Caco-2 (cell line): ENCODE measurements at regions of chr13 and their contacts with region 1.

Region 1: DNA sequence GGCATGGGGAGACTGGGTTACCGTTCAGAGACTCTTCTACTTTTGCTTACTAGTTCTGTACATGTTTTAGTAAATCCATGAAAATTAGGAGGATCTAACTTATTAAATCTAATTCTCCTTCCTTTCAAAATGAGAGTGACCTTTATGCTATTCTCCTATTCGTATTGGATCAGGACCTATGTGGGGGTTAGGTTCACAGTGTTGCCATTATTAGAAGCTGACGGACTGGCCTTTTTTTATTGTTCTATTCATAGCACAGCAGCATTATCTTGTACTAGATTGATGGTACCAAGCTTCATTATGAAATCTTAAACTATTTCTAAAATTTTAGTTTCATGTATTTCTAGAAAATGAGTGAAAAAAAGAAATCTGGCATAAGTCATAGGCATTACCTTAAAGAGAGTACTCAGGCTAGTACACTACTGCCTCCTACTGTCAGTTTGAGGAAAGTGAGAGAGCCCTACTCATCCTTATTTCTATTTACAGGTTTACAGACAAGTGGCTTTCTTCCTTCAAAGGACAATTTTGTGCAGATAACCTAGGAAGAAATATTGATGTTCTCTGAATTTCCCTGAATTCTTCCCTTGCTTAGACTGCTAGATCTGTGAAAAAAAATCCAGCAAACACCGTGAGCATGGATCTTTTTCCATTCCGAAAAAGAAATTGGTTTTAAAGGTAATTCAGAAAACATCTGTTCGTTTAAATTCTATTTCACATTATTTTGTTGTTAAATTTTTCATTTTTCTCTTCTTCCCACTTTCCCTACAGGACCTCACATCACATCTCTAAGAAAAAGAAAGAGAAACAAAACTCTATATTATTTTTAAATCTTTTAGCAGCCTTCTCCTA is 485.5 kb downstream of the DIAPH3 start:
- DNase-seq: peak in 1 of 2 experiments; percentile 51
- H3K4me3 ChIP-seq: no peak overlapping the region
- H3K4me3 Mint-ChIP-seq: no peak overlapping the region
- H3K27ac Mint-ChIP-seq: no peak overlapping the region
- H3K4me1 ChIP-seq: peaks cover 42% of the 10 kb centered on the region
- H3K4me1 Mint-ChIP-seq: peaks cover 6% of the 10 kb centered on the region
- H3K27me3 ChIP-seq: no peaks in the 10 kb centered on the region
- H3K27me3 Mint-ChIP-seq: no peaks in the 10 kb centered on the region
- CTCF ChIP-seq: peak; percentile 79 to 85

Region 2: GRCh38 chr13:59176775-59177174 is 501.4 kb before region 1 on chr13:
- CTCF ChIA-PET with region 1: no interaction called
- POLR2A ChIA-PET with region 1: no interaction called
- intact Hi-C with region 1: loop called (anchors 2 kb)
- DNase-seq: peak in 1 of 2 experiments; percentile 12
- H3K4me3 ChIP-seq: no peak overlapping the region
- H3K4me3 Mint-ChIP-seq: no peak overlapping the region
- H3K27ac Mint-ChIP-seq: no peak overlapping the region
- H3K4me1 ChIP-seq: no peaks in the 10 kb centered on the region
- H3K4me1 Mint-ChIP-seq: no peaks in the 10 kb centered on the region
- H3K27me3 ChIP-seq: no peaks in the 10 kb centered on the region
- H3K27me3 Mint-ChIP-seq: no peaks in the 10 kb centered on the region
- CTCF ChIP-seq: peak; percentile 42 to 54

Region 3: DNA sequence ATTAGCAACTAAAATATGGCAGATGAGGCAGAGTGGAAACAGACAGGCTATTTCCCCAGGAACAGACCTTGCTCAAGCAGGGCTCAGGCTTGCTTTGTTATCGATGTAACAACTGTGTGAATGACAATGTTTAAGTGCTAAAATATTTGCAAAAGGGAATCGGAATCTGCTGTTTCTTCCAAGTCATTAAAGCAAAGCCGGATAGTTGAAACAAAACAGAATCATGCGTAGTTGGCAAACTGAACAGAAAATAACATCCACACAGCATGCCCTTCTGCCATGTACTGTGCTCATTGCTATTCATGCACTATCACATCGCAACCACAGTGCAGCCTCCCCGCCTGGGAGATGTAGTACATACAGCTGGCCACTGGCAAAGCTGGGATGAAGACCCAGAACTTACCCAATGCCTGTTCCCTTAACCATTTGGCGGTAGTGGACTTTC is 313.5 kb before region 1 on chr13:
- CTCF ChIA-PET with region 1: no interaction called
- POLR2A ChIA-PET with region 1: no interaction called
- intact Hi-C with region 1: no loop called
- DNase-seq: peak in 1 of 2 experiments; percentile 13
- H3K4me3 ChIP-seq: no peak overlapping the region
- H3K4me3 Mint-ChIP-seq: no peak overlapping the region
- H3K27ac Mint-ChIP-seq: no peak overlapping the region
- H3K4me1 ChIP-seq: peaks cover 10% of the 10 kb centered on the region
- H3K4me1 Mint-ChIP-seq: peaks cover 8% of the 10 kb centered on the region
- H3K27me3 ChIP-seq: no peaks in the 10 kb centered on the region
- H3K27me3 Mint-ChIP-seq: no peaks in the 10 kb centered on the region
- CTCF ChIP-seq: no peak

Region 4: DNA sequence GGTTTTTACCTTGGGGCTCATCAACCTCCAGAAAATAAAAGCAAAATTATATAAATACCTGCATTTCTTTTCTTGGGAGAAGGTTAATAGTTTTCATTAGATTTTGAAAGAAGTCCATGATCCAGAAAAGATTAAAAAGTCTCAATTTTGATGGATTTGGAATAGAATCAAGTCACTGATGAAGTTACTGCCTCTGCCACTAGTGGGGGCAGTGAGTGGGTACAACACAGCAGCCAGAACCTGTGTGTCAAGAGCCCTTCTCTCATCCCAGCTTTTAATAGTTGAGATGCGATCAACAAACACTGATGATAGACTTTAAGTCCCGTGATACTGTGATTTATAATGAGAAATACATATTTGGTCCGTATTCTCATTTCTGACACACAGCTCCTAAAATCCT is 201.2 kb before region 1 on chr13:
- CTCF ChIA-PET with region 1: no interaction called
- POLR2A ChIA-PET with region 1: no interaction called
- intact Hi-C with region 1: loop called (anchors 1 kb)
- DNase-seq: peak in 1 of 2 experiments; percentile 11
- H3K4me3 ChIP-seq: no peak overlapping the region
- H3K4me3 Mint-ChIP-seq: no peak overlapping the region
- H3K27ac Mint-ChIP-seq: no peak overlapping the region
- H3K4me1 ChIP-seq: no peaks in the 10 kb centered on the region
- H3K4me1 Mint-ChIP-seq: peaks cover 6% of the 10 kb centered on the region
- H3K27me3 ChIP-seq: no peaks in the 10 kb centered on the region
- H3K27me3 Mint-ChIP-seq: no peaks in the 10 kb centered on the region
- CTCF ChIP-seq: peak; percentile 23 to 54

Region 5: GRCh38 chr13:59531571-59532091 is 146.6 kb before region 1 on chr13:
- CTCF ChIA-PET with region 1: no interaction called
- POLR2A ChIA-PET with region 1: no interaction called
- intact Hi-C with region 1: no loop called
- DNase-seq: no peak
- H3K4me3 ChIP-seq: no peak overlapping the region
- H3K4me3 Mint-ChIP-seq: no peak overlapping the region
- H3K27ac Mint-ChIP-seq: no peak overlapping the region
- H3K4me1 ChIP-seq: no peaks in the 10 kb centered on the region
- H3K4me1 Mint-ChIP-seq: peaks cover 12% of the 10 kb centered on the region
- H3K27me3 ChIP-seq: no peaks in the 10 kb centered on the region; the same call in 1 of the 2 replicates
- H3K27me3 Mint-ChIP-seq: no peaks in the 10 kb centered on the region
- CTCF ChIP-seq: no peak

Region 6: DNA sequence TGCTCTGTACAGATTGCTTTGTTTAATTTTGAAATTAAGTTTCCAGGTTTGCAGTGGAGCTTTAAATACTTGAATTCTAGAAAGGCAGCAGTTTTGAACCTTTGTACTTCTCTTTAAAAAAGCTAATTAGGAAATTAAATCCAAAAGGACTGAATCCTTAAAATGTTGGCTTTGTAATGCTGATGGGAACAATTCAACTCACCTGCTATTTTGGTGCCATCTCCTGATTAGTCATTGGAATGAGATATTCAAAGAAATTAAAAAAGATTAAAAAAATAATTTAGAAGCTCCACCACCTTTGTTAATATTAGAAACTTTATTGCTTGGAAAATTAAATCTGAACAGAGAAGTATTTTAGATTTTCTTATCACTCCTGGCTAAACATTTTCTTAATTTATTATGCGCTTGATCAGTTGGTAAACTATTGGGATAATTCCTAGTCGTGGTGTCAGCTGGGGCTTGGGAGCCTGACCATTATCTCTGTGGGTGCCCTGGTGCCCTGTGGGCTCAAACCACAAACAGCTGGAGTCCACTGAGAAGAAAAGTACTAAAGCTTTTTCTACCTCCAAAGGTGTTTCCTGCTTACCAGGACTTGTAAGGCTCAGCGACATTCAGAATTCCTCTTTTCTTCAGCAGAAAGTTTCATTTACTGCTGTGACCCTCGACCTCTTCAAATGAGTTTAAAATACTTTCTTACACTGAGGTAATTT is 54.8 kb before region 1 on chr13:
- CTCF ChIA-PET with region 1: no interaction called
- POLR2A ChIA-PET with region 1: no interaction called
- intact Hi-C with region 1: no loop called
- DNase-seq: no peak
- H3K4me3 ChIP-seq: no peak overlapping the region
- H3K4me3 Mint-ChIP-seq: no peak overlapping the region
- H3K27ac Mint-ChIP-seq: no peak overlapping the region
- H3K4me1 ChIP-seq: no peaks in the 10 kb centered on the region
- H3K4me1 Mint-ChIP-seq: no peaks in the 10 kb centered on the region
- H3K27me3 ChIP-seq: no peaks in the 10 kb centered on the region
- H3K27me3 Mint-ChIP-seq: no peaks in the 10 kb centered on the region
- CTCF ChIP-seq: no peak

Region 7: DNA sequence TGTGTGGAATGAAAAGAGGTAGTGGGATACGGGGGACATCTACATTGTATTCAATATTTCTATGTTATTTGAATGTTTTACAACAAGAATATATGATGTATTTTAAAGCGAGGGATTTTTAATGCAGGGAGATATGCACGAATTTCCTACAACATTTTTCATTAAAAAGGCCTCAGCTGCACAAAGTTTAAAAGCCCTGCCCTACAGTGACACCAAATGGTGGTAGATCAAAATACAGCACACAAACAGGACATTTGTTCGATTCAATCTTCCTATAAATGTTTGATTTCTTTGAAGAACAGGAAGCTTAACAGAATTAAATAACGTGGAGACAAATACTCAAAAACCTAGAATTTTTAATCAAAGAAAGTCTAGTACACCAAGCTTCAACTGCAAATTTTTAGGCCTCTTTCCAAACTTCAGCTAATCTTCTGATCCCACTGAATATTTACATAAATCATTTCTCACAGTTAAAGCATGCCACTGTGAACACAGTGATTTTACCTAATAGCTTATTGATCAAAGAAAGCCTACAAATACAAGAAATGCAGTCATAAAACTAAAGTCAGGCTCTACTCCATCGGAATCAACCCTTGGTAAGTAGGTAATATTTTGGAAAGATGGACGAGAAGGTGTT is 228.3 kb after region 1 on chr13:
- CTCF ChIA-PET with region 1: interaction called, 18 read pairs
- POLR2A ChIA-PET with region 1: no interaction called
- intact Hi-C with region 1: loop called (anchors 1 kb)
- DNase-seq: peak in 1 of 2 experiments; percentile 30
- H3K4me3 ChIP-seq: no peak overlapping the region
- H3K4me3 Mint-ChIP-seq: no peak overlapping the region
- H3K27ac Mint-ChIP-seq: no peak overlapping the region
- H3K4me1 ChIP-seq: peaks cover 11% of the 10 kb centered on the region; the same call in 1 of the 2 replicates
- H3K4me1 Mint-ChIP-seq: peaks cover 7% of the 10 kb centered on the region
- H3K27me3 ChIP-seq: no peaks in the 10 kb centered on the region
- H3K27me3 Mint-ChIP-seq: no peaks in the 10 kb centered on the region
- CTCF ChIP-seq: peak; percentile 66 to 67

Region 8: GRCh38 chr13:60431108-60431700 is 753.0 kb after region 1 on chr13:
- CTCF ChIA-PET with region 1: interaction called, 4 read pairs
- POLR2A ChIA-PET with region 1: no interaction called
- intact Hi-C with region 1: loop called (anchors 10 kb)
- DNase-seq: peak in 1 of 2 experiments; percentile 58
- H3K4me3 ChIP-seq: no peak overlapping the region
- H3K4me3 Mint-ChIP-seq: no peak overlapping the region
- H3K27ac Mint-ChIP-seq: no peak overlapping the region
- H3K4me1 ChIP-seq: no peaks in the 10 kb centered on the region
- H3K4me1 Mint-ChIP-seq: no peaks in the 10 kb centered on the region
- H3K27me3 ChIP-seq: no peaks in the 10 kb centered on the region
- H3K27me3 Mint-ChIP-seq: no peaks in the 10 kb centered on the region
- CTCF ChIP-seq: peak; percentile 85 to 86